ENCODE measurements at regions of chr1 and their contacts with region 1.

Region 1: DNA sequence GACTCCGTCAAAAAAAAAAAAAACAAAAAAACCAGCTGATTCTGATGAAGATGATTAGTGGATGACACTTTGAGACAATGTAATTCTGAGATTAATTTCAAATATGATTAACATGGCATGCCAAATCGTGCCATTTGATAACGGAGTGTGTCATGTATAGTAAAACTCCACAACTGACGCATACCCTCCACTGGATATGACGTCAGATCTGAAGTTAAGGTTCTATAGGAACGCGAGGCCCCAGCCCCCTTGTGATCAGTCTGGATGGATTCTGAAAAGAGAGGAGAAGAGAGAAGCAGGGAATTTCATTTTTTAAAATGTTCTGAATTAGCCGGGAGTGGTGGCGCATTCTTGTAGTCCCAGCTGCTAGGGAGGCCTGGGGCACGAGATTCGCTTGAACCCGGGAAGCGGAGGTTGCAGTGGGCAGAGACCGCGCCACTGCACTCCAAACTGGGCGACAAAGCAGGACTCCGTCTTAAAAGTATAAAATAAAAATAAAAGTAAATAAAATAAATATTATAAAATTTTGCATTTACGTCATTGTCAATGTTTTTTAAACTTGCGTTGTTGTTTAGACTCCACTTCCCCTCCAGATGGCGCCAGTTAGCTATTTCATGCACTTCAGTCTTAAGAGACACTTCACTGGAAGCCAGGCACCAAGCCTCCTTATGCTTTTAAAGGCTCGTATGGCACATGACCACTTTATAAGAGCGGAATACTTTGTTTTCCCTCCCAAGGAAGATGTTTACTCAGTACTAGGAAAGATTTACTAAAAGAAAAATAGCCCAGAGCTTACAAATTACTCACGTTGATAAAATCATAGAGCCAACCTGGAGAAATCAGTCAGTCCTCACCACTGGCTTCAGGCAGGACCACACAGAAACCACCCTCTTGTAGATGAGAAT is 65.5 kb downstream of the UBE2U start:
- DNase-seq: no peak
- H3K4me3 ChIP-seq: no peak overlapping the region
- H3K27ac ChIP-seq: no peak overlapping the region
- H3K4me1 ChIP-seq: peaks cover 3 to 6% (median 4%) of the 10 kb centered on the region in 4 donors
- H3K27me3 ChIP-seq: no peaks in the 10 kb centered on the region
- CTCF ChIP-seq: peak; percentile 70 to 75 (median 74)
- EP300 ChIP-seq: no peak
- POLR2A ChIP-seq: no peak

Region 2: DNA sequence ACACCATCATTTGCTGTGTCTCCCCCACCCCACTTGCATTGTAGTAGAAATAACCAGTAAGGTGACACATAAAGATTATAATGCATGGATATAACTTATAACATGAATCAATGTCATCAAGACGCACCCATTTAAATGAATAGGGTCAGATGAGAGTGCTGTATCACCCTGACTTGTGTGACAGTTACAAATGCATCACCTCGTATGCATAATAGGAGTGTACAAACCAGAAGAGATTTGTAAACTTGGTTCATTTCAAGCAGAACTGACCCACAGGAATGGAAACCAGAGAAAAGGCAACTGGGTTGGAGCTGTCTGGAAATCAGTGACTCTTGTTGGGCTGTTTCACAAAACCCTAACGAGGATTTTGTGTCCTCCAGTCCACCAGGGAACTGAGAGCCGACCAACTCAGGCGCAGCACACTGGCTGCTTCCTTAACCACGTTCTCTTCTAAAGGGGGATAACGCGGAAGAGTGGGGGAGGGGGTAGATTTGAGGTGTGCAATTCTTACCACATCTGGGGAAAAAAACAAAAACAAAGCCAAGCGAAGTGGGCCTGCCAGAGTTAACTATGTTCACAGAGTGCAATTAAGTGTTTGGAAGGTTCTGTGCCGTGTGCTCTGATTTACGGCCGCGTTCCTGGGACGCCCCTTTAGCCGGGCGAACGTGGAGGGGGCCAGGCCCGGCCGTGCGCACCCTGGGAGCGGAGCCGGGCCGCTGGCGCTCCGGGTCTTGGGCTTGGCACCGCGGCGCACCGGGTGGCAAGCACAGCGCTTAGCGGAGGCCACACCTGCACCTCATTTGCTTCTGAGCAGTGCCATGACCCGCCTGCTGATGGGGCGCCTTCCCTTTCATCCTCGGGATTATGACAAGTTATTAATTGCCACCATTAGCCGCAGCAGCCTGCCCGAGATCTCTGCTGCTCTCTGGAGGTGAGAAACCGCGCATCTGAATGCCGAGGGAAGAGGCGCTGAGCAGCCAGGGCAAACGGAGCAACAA is 1195.3 kb before region 1 on chr1:
- intact Hi-C with region 1: no loop called
- DNase-seq: no peak
- H3K4me3 ChIP-seq: peak overlapping the region; percentile 20 to 45 (median 36)
- H3K27ac ChIP-seq: no peak overlapping the region
- H3K4me1 ChIP-seq: peaks cover 0 to 10% (median 8%) of the 10 kb centered on the region in 4 donors
- H3K27me3 ChIP-seq: peaks cover 0 to 67% (median 4%) of the 10 kb centered on the region in 4 donors
- CTCF ChIP-seq: peak in 1 of 3 experiments; percentile 6
- EP300 ChIP-seq: no peak
- POLR2A ChIP-seq: no peak

Region 3: GRCh38 chr1:64337475-64337874 is 68.6 kb after region 1 on chr1:
- intact Hi-C with region 1: no loop called
- DNase-seq: no peak
- H3K4me3 ChIP-seq: no peak overlapping the region
- H3K27ac ChIP-seq: no peak overlapping the region
- H3K4me1 ChIP-seq: no peaks in the 10 kb centered on the region
- H3K27me3 ChIP-seq: no peaks in the 10 kb centered on the region
- CTCF ChIP-seq: no peak
- EP300 ChIP-seq: no peak
- POLR2A ChIP-seq: no peak

Region 4: DNA sequence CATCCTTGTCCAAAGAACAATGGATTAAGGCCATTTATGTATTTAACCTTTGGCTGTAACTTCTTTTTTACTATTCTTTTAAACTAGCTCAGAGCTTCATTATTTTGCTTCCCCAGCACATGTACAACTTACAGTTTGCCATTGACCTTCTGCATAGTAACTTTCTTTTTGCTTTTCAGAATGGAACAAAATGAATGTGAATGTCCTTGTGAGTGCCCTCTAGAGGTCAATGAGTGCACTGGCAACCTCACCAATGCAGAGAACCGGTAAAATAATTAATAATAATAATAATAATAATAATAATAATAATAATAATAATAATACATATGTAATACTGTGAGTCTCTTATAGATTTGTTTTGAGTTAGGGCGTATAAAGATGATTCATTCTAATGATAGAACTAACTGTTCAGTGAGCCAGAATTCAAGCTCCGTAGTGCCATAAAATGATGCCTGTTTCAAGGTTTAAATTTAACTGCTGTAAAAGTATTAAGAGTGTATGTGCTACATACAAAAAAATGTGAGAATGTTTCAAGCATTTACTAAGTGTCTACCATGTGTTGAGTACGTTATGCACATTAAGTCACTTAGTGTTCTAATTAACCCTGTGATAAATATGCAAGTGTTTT is 406.9 kb after region 1 on chr1:
- intact Hi-C with region 1: loop called (anchors 5 kb)
- DNase-seq: no peak
- H3K4me3 ChIP-seq: no peak overlapping the region
- H3K27ac ChIP-seq: no peak overlapping the region
- H3K4me1 ChIP-seq: no peaks in the 10 kb centered on the region
- H3K27me3 ChIP-seq: no peaks in the 10 kb centered on the region
- CTCF ChIP-seq: peak; percentile 45 to 76 (median 70)
- EP300 ChIP-seq: no peak
- POLR2A ChIP-seq: no peak

Measured in esophagus muscularis mucosa (tissue), 4 donors.